Posterior cingulate gyrus (tissue), 11 donors: ENCODE measurements at regions of chr11 and their contacts with region 1.

Region 1: GRCh38 chr11:37450613-37451012 is 852.6 kb upstream of the RAG2 start:
- DNase-seq: no peak

Region 2: GRCh38 chr11:38305682-38306081 is 855.1 kb after region 1 on chr11:
- intact Hi-C with region 1: no loop called
- DNase-seq: no peak

Region 3: GRCh38 chr11:38788561-38788960 is 1337.9 kb after region 1 on chr11:
- intact Hi-C with region 1: loop called (anchors 10 kb)
- DNase-seq: no peak